ENCODE measurements at regions of chrX and their contacts with region 1.

Region 1: DNA sequence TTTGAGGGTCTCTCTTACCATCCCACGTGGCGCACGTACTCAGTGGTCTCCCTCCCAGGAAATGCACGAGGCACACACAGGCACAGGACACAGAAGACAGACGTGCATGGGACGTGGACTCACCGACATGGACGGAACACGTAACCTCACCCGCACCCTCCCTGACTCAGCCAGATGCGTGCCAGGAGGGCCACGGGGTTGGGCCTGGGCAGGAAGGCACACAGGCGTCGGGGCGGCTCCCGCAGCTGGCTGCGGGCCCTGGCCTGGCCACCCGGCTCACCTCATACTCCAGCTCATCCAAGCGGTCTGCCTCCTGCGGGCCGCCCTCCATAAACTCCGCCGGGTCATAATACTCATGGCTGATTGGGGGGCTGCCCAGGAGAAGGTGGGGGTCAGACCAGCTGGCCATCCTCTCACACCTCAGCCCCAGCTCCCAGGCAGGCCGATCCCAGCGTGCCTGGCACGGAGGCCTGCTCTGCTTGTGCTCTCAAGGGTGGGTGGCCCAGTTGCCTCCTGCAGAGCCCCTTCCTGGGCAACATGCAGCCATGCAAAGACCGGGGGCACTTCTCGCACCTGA is 12.6 kb downstream of the SSR4 start:
- DNase-seq: no peak
- H3K4me3 ChIP-seq: no peak overlapping the region
- H3K27ac ChIP-seq: no peak overlapping the region
- H3K4me1 ChIP-seq: peaks cover 0 to 3% (median 1%) of the 10 kb centered on the region in 4 experiments; a peak in 2 of 7 replicates
- H3K27me3 ChIP-seq: no peaks in the 10 kb centered on the region
- CTCF ChIP-seq: no peak
- EP300 ChIP-seq: no peak
- POLR2A ChIP-seq: no peak
- RAD21 ChIP-seq: no peak

Region 2: DNA sequence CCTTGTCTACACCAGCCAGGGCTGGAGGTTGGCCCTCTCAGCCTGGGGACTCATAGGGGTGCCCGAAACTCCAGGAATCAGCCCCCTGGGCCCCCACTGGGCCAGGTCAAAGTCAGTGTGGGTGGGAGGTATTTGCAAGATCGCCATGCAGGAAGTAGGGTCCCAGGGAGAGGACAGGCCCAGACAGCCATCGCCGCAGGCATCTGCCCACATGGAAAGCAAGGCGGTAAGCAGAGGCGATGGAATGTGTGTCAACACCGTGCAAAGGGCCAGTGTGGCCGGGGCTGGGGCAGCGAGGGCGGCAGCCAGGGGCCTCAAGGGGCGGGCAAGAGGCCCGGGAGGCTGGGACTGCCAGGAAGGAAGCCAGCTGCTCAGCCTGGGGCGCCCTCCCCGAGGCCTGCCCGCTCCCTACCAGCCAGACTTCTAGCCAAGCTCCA is 179.4 kb before region 1 on chrX:
- CTCF ChIA-PET with region 1: no interaction called
- POLR2A ChIA-PET with region 1: no interaction called
- DNase-seq: no peak
- H3K4me3 ChIP-seq: no peak overlapping the region
- H3K27ac ChIP-seq: no peak overlapping the region
- H3K4me1 ChIP-seq: peaks cover 0 to 3% (median 0%) of the 10 kb centered on the region in 4 experiments; a peak in 1 of 7 replicates
- H3K27me3 ChIP-seq: no peaks in the 10 kb centered on the region
- CTCF ChIP-seq: no peak
- EP300 ChIP-seq: no peak
- POLR2A ChIP-seq: no peak
- RAD21 ChIP-seq: no peak

Region 3: GRCh38 chrX:153794018-153794896 is 12.8 kb before region 1 on chrX and contains the starts of genes IDH3G and SSR4:
- CTCF ChIA-PET with region 1: interaction called, 4 read pairs
- POLR2A ChIA-PET with region 1: interaction called, 22 read pairs
- DNase-seq: peak; percentile 81 to 91
- H3K4me3 ChIP-seq: peak within 1 kb of the TSS; percentile 77 to 92 (median 83)
- H3K27ac ChIP-seq: peak within 1 kb of the TSS; percentile 96; the same call in 1 of the 2 replicates
- H3K4me1 ChIP-seq: peaks cover 0 to 17% (median 6%) of the 10 kb centered on the region in 4 experiments; a peak in 4 of 7 replicates
- H3K27me3 ChIP-seq: no peaks in the 10 kb centered on the region
- CTCF ChIP-seq: peak in 1 of 3 experiments; percentile 26; a peak in 1 of 4 replicates
- EP300 ChIP-seq: no peak
- POLR2A ChIP-seq: peak in 1 of 2 experiments; percentile 57; a peak in 2 of 3 replicates
- RAD21 ChIP-seq: no peak
- total RNA-seq, gene IDH3G: 36.1 and 39.4 TPM in 2 replicates
- total RNA-seq, gene SSR4: 161 and 168 TPM in 2 replicates

Measured in H1 (cell line).